ENCODE measurements at regions of chr15 and their contacts with region 1.

Region 1: GRCh38 chr15:64731012-64731806 is 44.2 kb downstream of the RBPMS2 start:
- DNase-seq: peak; percentile 90 to 94 (median 91)
- H3K4me3 ChIP-seq: no peak overlapping the region
- H3K27ac ChIP-seq: peak overlapping the region in 1 of 2 donors; percentile 2
- H3K4me1 ChIP-seq: peaks cover 0 to 9% (median 0%) of the 10 kb centered on the region in 3 donors
- H3K27me3 ChIP-seq: no peaks in the 10 kb centered on the region
- CTCF ChIP-seq: peak; percentile 94

Region 2: DNA sequence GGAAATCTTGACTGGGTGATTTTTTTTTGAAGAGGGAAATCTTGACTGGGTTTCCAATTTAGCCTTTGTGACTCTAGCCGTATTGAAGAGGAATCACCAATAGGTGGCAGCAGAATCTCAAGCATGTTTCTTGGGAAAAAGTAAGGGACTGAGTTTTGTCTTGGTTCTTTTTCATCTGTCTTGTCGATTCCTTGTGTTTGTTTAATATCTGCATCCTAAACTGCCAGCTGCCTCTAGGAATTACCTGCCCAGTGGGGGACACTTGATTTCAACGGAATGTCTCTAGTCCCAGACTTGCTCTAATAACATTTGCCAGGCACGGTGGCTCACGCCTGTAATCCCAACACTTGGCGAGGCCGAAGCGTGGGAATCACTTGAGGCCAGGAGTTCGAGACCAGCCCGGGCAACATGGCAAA is 45.0 kb before region 1 on chr15:
- intact Hi-C with region 1: loop called (anchors 2 kb)
- DNase-seq: peak in 3 of 5 donors; percentile 53 to 91 (median 85)
- H3K4me3 ChIP-seq: no peak overlapping the region
- H3K27ac ChIP-seq: no peak overlapping the region
- H3K4me1 ChIP-seq: peaks cover 2 to 24% (median 19%) of the 10 kb centered on the region in 3 donors
- H3K27me3 ChIP-seq: no peaks in the 10 kb centered on the region
- CTCF ChIP-seq: peak; percentile 75

Region 3: GRCh38 chr15:64809649-64810496 is 78.7 kb after region 1 on chr15:
- intact Hi-C with region 1: loop called (anchors 5 kb)
- DNase-seq: peak; percentile 84 to 91 (median 89)
- H3K4me3 ChIP-seq: no peak overlapping the region
- H3K27ac ChIP-seq: no peak overlapping the region
- H3K4me1 ChIP-seq: no peaks in the 10 kb centered on the region
- H3K27me3 ChIP-seq: no peaks in the 10 kb centered on the region
- CTCF ChIP-seq: peak; percentile 92

Region 4: DNA sequence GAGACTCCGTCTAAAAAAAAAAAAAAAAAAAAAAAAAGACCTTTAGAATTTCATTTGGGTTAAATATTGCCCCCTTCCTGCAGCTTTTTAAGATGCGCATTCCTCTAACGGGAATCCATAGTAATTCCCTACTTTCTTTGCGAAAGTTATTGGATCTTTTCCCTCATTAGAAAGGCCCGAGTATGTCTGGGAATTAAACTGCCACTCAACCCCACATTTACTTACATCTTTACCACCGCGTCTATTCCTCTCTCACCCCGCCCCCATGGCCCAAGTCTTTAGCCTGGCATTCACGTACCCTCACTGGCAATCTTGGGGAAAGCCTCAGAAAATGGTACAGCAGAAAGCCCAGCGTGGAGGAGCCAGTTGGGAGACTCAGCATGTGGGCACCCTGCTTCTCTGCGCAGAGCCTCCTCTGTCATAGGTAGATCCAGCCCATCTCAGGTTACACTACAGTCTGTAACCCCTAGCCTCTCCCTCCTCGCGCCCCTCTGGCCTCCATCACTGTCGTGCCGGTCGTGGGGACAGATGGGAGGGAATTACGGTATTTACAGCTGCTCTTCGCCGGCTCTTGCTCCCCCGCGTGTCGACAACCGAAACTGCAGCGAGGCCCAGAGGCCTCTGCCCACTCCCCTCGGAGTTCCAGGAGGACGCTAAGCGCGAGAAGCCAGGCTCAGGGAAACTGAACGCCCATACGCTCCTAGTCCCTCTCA is 174.1 kb after region 1 on chr15:
- intact Hi-C with region 1: loop called (anchors 10 kb)
- DNase-seq: peak; percentile 84 to 89 (median 88)
- H3K4me3 ChIP-seq: peak overlapping the region; percentile 17 to 69 (median 62)
- H3K27ac ChIP-seq: no peak overlapping the region
- H3K4me1 ChIP-seq: peaks cover 0 to 6% (median 0%) of the 10 kb centered on the region in 3 donors
- H3K27me3 ChIP-seq: no peaks in the 10 kb centered on the region
- CTCF ChIP-seq: peak; percentile 82

Measured in kidney (tissue), 22 donors.